ENCODE measurements at regions of chr1 and their contacts with region 1.

Region 1: GRCh38 chr1:150464422-150464826 is 22.8 kb upstream of the TARS2 start:
- DNase-seq: no peak

Region 2: GRCh38 chr1:150532868-150533302 is 68.5 kb after region 1 on chr1:
- intact Hi-C with region 1: loop called (anchors 2 kb)
- DNase-seq: no peak

Region 3: GRCh38 chr1:150813058-150813707 is 348.8 kb after region 1 on chr1:
- intact Hi-C with region 1: loop called (anchors 10 kb)
- DNase-seq: peak; percentile 87

Region 4: GRCh38 chr1:150995896-150996295 is 531.5 kb after region 1 on chr1:
- intact Hi-C with region 1: loop called (anchors 10 kb)
- DNase-seq: no peak

Measured in cardiac septum (tissue), 1 donor.